CD4-positive, alpha-beta T cell (primary cell): ENCODE measurements at regions of chr4 and their contacts with region 1.

Region 1: DNA sequence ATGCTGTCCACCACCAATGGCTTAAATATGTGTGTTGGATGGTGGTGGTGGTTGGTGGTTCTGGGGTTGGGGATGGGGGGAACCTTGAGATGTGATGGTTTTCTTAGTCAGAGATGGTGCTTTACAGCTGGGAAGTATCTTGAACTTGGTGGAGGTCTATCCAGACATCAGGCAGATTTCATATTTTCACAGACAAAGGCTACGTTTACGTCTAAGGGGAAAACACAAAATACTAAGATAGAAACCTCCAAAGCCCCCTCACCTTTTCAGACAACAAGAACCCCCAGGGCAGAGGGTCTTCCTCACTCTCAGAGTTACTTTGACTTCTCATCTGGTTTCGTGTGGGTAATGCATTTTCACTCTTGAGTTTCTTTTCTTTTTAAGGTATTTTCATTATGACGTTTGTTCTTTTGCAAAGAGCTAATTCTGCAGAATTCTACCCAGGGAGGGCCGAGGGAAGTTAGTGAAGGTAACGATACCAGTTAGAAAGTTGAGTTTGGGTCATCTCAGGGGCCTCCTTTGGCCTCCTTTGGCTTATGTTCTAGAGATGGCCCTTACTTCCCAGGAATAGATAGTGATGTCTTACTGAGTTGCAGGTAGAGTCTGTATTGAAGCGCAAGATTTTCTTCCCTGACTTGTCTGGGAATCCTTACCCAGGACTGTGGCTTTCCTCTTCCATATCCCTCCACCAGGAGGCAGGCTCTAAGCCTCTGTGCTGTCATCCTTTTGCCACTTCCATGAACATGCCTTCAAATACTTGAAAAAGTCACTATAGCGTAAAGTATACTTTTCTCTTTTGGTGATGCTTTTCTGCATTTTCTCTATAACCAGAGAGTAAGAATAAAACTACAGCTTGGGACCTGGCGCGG is 31.9 kb downstream of the RHOH start:
- DNase-seq: peak in 1 of 14 experiments; percentile 52
- ATAC-seq: no peak
- H3K4me3 ChIP-seq: peak overlapping the region; percentile 8
- H3K4me3 Mint-ChIP-seq: peak overlapping the region; percentile 49
- H3K27ac ChIP-seq: peak overlapping the region; percentile 70 to 82
- H3K27ac Mint-ChIP-seq: peak overlapping the region; percentile 93
- H3K4me1 ChIP-seq: peaks cover 86% of the 10 kb centered on the region
- H3K4me1 Mint-ChIP-seq: peaks cover 91% of the 10 kb centered on the region
- H3K27me3 ChIP-seq: no peaks in the 10 kb centered on the region
- H3K27me3 Mint-ChIP-seq: no peaks in the 10 kb centered on the region
- CTCF ChIP-seq: peak; percentile 37

Region 2: DNA sequence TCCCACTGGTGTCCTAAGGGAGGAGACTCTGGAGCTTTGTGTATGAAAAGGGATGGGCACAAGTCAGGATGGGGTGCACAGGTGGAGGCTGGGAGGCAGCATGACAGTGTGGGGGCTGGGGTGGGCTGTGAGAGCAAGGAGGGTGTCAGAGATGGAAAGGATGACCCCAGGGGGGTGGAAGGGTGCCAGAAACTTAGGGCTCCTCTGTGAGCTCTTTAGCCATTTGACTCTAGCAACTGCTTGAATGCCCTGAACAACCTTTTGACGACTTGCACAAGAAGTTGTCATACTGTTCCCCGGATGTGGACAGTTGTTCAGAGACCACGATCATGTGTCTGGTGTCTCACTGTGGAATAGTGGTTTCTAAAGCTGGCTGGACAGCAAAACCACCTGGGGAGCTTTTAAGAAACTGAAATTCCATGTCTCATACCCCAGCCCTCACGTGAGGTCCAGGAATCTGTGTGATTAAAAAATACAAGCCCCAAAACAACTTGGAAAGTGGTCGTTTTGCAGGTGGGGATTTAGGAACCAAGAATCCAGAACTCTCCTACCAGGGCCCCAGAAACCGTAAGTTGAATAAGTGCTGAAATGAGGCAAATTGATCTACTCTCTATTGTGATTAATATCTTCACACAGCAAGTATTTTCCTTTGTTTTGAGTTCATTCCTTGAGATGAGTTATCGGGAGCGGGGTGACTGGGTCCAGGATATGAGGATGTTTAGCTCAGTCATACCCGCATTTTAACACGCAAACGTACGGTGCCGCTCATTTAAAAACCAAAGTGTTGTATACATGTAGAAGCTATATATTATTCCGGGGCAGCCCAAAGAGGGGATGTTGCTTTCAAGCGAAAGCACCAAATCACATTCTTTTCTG is 28.5 kb before region 1 on chr4:
- CTCF ChIA-PET with region 1: interaction called, 4 read pairs
- POLR2A ChIA-PET with region 1: interaction called, 156 read pairs
- intact Hi-C with region 1: loop called (anchors 2 to 5 kb)
- DNase-seq: peak in 10 of 14 experiments; percentile 31 to 90 (median 50)
- ATAC-seq: peak; percentile 18
- H3K4me3 ChIP-seq: peak overlapping the region; percentile 74
- H3K4me3 Mint-ChIP-seq: peak overlapping the region; percentile 100
- H3K27ac ChIP-seq: peak overlapping the region; percentile 93 to 99
- H3K27ac Mint-ChIP-seq: peak overlapping the region; percentile 99
- H3K4me1 ChIP-seq: peaks cover 33% of the 10 kb centered on the region
- H3K4me1 Mint-ChIP-seq: peaks cover 46% of the 10 kb centered on the region
- H3K27me3 ChIP-seq: no peaks in the 10 kb centered on the region
- H3K27me3 Mint-ChIP-seq: no peaks in the 10 kb centered on the region
- CTCF ChIP-seq: no peak

Region 3: GRCh38 chr4:40212674-40213527 is 15.8 kb before region 1 on chr4:
- CTCF ChIA-PET with region 1: interaction called, 4 read pairs
- POLR2A ChIA-PET with region 1: interaction called, 64 read pairs
- intact Hi-C with region 1: loop called in 1 of 2 experiments (anchors 1 kb)
- DNase-seq: peak in 1 of 14 experiments; percentile 26
- ATAC-seq: no peak
- H3K4me3 ChIP-seq: peak overlapping the region; percentile 25
- H3K4me3 Mint-ChIP-seq: peak overlapping the region; percentile 71
- H3K27ac ChIP-seq: peak overlapping the region; percentile 73 to 85
- H3K27ac Mint-ChIP-seq: peak overlapping the region; percentile 99
- H3K4me1 ChIP-seq: peaks cover 74% of the 10 kb centered on the region
- H3K4me1 Mint-ChIP-seq: peaks cover 94% of the 10 kb centered on the region
- H3K27me3 ChIP-seq: no peaks in the 10 kb centered on the region
- H3K27me3 Mint-ChIP-seq: no peaks in the 10 kb centered on the region
- CTCF ChIP-seq: no peak

Region 4: DNA sequence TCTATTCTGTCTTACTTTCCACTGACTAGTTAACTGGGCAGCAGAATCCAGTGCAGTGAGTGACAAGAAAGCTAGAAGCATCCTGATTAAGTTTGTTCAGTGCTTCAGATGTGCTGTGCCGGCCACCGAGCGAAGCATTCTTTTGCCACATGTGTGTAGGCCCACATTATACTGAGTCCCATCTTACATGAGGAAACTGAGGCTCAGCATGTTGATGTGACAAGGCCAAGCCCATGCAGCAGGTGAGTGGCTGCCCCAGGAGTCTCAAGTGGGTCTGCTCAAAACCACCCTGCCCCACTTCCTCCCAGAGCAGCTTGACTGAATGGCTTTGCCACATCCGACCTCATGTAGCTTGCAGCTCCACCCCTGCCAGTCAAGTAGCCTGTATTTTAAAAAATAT is 18.6 kb after region 1 on chr4:
- CTCF ChIA-PET with region 1: interaction called, 6 read pairs
- POLR2A ChIA-PET with region 1: interaction called, 49 read pairs
- intact Hi-C with region 1: loop called in 1 of 2 experiments (anchors 2 kb)
- DNase-seq: peak; percentile 51 to 87 (median 66)
- ATAC-seq: peak; percentile 81
- H3K4me3 ChIP-seq: no peak overlapping the region
- H3K4me3 Mint-ChIP-seq: peak overlapping the region; percentile 45
- H3K27ac ChIP-seq: peak overlapping the region; percentile 71 to 72
- H3K27ac Mint-ChIP-seq: peak overlapping the region; percentile 93
- H3K4me1 ChIP-seq: peaks cover 84% of the 10 kb centered on the region
- H3K4me1 Mint-ChIP-seq: peaks cover 88% of the 10 kb centered on the region
- H3K27me3 ChIP-seq: no peaks in the 10 kb centered on the region
- H3K27me3 Mint-ChIP-seq: no peaks in the 10 kb centered on the region
- CTCF ChIP-seq: no peak

Region 5: DNA sequence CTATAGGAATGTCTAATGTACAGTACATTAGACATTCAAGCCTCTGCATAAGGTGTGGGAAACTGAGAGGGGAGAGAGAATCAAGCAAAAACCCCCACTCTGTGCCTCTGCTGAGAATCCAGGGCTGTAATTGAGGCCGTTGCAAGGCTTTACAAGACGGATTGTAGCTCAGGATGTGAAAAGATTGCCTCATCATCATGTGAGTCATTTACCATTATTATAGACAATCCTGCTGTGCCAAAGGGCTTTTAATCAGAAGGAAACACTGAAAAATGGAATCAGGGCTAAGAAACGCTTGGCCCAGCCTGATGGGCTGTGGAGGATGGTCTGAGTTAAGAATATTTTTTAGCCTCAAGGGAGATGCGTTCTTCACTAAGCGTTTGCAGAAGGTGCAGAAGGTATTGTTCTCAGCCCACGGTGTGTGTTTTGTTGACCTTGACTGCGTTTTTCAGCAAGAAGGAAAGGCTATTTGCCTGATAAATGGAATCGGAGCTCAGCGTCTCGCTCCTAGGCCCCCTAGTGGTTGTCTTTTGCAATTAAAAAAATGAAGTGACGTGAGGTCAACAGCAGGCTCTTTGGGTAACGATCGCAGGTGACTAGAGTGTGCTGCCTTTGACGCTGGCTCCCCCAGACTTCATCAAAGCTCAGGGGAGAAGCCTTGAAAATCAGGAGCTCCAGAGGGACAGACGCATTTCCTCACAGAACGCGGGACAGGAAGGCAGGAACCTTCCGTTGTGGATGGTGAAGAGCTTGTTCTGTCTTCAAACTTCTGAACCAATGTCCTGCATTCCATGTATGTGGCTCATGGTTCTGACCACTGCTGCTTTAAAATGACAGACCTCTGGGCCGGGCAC is 88.3 kb after region 1 on chr4:
- CTCF ChIA-PET with region 1: interaction called, 7 read pairs
- POLR2A ChIA-PET with region 1: interaction called, 11 read pairs
- intact Hi-C with region 1: no loop called
- DNase-seq: peak in 13 of 14 experiments; percentile 34 to 88 (median 54)
- ATAC-seq: peak; percentile 67
- H3K4me3 ChIP-seq: peak overlapping the region; percentile 54
- H3K4me3 Mint-ChIP-seq: peak overlapping the region; percentile 83
- H3K27ac ChIP-seq: peak overlapping the region; percentile 69 to 80
- H3K27ac Mint-ChIP-seq: peak overlapping the region; percentile 91
- H3K4me1 ChIP-seq: peaks cover 20% of the 10 kb centered on the region
- H3K4me1 Mint-ChIP-seq: peaks cover 57% of the 10 kb centered on the region
- H3K27me3 ChIP-seq: no peaks in the 10 kb centered on the region
- H3K27me3 Mint-ChIP-seq: no peaks in the 10 kb centered on the region
- CTCF ChIP-seq: peak; percentile 86

Region 6: DNA sequence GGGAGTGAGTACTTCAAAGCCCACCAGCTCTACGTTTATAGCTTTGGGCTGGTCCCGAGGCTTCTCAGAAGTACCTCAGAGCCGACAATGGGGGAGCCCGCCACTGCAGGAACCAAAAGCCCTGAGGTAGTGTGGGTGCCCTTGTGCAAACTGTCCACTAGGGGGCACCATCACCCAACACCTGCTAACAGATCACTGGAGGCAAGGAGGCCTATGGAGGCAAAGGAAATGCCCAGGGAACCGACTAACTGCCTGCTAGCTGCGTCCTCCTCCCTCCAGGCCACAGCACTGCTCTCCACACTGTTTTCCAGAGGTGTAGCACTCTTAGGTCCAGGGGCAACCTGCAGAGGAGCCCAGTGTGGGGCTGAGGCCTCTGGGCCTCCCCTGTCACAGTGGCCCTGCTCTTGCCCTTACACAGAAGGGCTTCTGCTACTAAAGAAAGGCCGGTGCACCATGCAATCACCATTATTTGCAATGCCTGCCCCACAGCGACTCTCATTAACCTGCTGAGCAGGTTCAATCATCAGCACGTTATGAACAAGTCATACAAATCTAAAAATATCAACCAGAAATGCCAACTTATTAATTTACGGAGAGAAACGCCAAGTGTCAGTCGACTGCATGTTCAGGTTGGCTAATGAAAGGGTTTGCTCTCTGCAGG is 680.1 kb after region 1 on chr4:
- CTCF ChIA-PET with region 1: no interaction called
- POLR2A ChIA-PET with region 1: no interaction called
- intact Hi-C with region 1: no loop called
- DNase-seq: peak; percentile 26 to 78 (median 48)
- ATAC-seq: peak; percentile 78
- H3K4me3 ChIP-seq: no peak overlapping the region
- H3K4me3 Mint-ChIP-seq: no peak overlapping the region
- H3K27ac ChIP-seq: no peak overlapping the region
- H3K27ac Mint-ChIP-seq: no peak overlapping the region
- H3K4me1 ChIP-seq: peaks cover 9% of the 10 kb centered on the region
- H3K4me1 Mint-ChIP-seq: peaks cover 17% of the 10 kb centered on the region
- H3K27me3 ChIP-seq: no peaks in the 10 kb centered on the region
- H3K27me3 Mint-ChIP-seq: no peaks in the 10 kb centered on the region
- CTCF ChIP-seq: peak; percentile 73